Left cardiac atrium (tissue), 4 donors: ENCODE measurements at regions of chr9 and their contacts with region 1.

Region 1: DNA sequence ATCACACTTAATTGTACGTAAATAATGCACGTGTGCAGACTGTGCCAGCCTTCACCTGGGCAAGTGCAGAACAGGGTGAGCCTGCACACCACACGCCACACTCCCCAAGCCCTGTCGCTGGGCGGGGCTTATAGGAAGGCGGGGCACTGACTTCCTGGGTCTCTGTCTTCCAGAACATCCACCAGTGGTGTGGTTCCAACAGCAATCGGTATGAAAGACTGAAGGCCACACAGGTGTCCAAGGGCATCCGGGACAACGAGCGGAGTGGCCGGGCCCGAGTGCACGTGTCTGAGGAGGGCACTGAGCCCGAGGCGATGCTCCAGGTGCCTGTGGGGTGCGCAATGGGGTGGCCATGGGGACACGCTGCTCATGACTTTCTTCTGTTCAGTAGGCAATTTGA is 44.2 kb downstream of the GSN start:
- DNase-seq: no peak
- ATAC-seq: no peak

Region 2: GRCh38 chr9:121246821-121247561 is 65.2 kb before region 1 on chr9:
- intact Hi-C with region 1: no loop called
- DNase-seq: peak; percentile 32
- ATAC-seq: peak; percentile 70 to 76

Region 3: GRCh38 chr9:121278535-121279261 is 33.5 kb before region 1 on chr9:
- intact Hi-C with region 1: loop called in 1 of 2 experiments (anchors 5 kb)
- DNase-seq: peak; percentile 66
- ATAC-seq: peak; percentile 49 to 70